Stomach (tissue), 19 donors: ENCODE measurements at regions of chr1 and their contacts with region 1.

Region 1: GRCh38 chr1:119808972-119809550 is 2.2 kb downstream of the REG4 start:
- DNase-seq: peak; percentile 82 to 93
- H3K4me3 ChIP-seq: no peak overlapping the region
- H3K27ac ChIP-seq: no peak overlapping the region
- H3K4me1 ChIP-seq: peaks cover 0 to 7% (median 2%) of the 10 kb centered on the region in 4 donors
- H3K27me3 ChIP-seq: peaks cover 0 to 16% (median 0%) of the 10 kb centered on the region in 3 donors
- CTCF ChIP-seq: peak in 5 of 7 experiments; percentile 35 to 80 (median 74)
- EP300 ChIP-seq: no peak
- POLR2A ChIP-seq: no peak

Region 2: GRCh38 chr1:119743781-119744597 is 65.1 kb before region 1 on chr1:
- intact Hi-C with region 1: loop called (anchors 10 kb)
- DNase-seq: peak; percentile 73 to 92
- H3K4me3 ChIP-seq: no peak overlapping the region
- H3K27ac ChIP-seq: peak overlapping the region in 2 of 5 donors; percentile 55 to 62
- H3K4me1 ChIP-seq: peaks cover 0 to 53% (median 21%) of the 10 kb centered on the region in 4 donors
- H3K27me3 ChIP-seq: no peaks in the 10 kb centered on the region
- CTCF ChIP-seq: peak in 5 of 7 experiments; percentile 67 to 79 (median 72)
- EP300 ChIP-seq: no peak
- POLR2A ChIP-seq: peak in 1 of 4 donors; percentile 6